Activated T-helper 1 cell treated with anti-CD3 and anti-CD28 coated beads, Interleukin-12 subunit alpha, Interleukin-12 subunit beta, Interleukin-2, Interleukin-4 antibody, amounts not matched to agents 30 ng/mL and 10 ng/mL and 1 ng/mL, durations not matched to agents 14 hours and 24 hours and 36 hours (primary cell): ENCODE measurements at regions of chr16 and their contacts with region 1.

Region 1: GRCh38 chr16:234468-235305 is at the start of gene FAM234A:
- DNase-seq: peak; percentile 92
- H3K4me3 Mint-ChIP-seq: peak within 1 kb of the TSS; percentile 96
- H3K27ac Mint-ChIP-seq: peak within 1 kb of the TSS; percentile 98
- H3K4me1 Mint-ChIP-seq: peaks cover 14% of the 10 kb centered on the region
- H3K27me3 Mint-ChIP-seq: peaks cover 6% of the 10 kb centered on the region
- total RNA-seq, gene FAM234A: 18.0 and 21.2 TPM in 2 replicates

Region 2: GRCh38 chr16:252366-253337 is 18.0 kb after region 1 on chr16:
- intact Hi-C with region 1: loop called (anchors 1 kb)
- DNase-seq: peak; percentile 16
- H3K4me3 Mint-ChIP-seq: peak overlapping the region; percentile 84
- H3K27ac Mint-ChIP-seq: peak overlapping the region; percentile 93
- H3K4me1 Mint-ChIP-seq: peaks cover 23% of the 10 kb centered on the region
- H3K27me3 Mint-ChIP-seq: peaks cover 7% of the 10 kb centered on the region

Region 3: GRCh38 chr16:278863-279366 is 44.2 kb after region 1 on chr16:
- intact Hi-C with region 1: loop called (anchors 2 kb)
- DNase-seq: peak; percentile 7
- H3K4me3 Mint-ChIP-seq: no peak overlapping the region
- H3K27ac Mint-ChIP-seq: no peak overlapping the region
- H3K4me1 Mint-ChIP-seq: no peaks in the 10 kb centered on the region
- H3K27me3 Mint-ChIP-seq: peaks cover 34% of the 10 kb centered on the region

Region 4: DNA sequence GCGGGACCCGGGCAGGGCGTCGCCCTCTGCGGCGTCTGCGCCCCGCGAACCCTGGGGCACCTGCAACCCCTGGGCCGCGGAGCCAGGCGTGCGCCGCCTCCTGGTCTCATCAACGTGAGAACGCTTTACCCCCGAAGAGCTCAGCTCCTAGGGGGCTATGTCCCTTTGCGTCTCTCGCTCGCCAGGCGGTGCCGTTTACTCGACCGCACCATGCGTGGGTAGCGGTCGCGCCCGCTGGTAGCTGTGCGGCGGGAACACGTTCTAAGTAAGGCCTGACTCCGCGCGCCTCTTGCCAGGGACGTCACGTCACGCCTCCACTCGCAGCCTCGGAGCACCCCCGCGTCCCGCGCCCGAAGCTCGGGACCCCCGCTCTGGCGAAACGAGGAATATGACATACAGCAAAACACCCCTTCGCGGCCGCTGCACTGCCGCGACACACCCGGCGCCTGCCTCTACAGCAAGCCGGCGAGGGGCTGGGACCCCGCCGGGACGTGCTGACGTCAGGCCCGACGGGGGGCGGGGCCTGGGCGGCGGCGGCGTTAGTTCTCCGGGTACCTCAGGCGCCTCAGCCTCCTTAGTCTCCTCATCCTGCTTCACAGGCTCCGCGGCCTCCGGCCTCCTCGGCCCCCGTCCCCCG is 190.5 kb after region 1 on chr16 and contains the start of gene RAB11FIP3:
- intact Hi-C with region 1: loop called (anchors 1 kb)
- DNase-seq: peak; percentile 83
- H3K4me3 Mint-ChIP-seq: peak within 1 kb of the TSS; percentile 84
- H3K27ac Mint-ChIP-seq: peak within 1 kb of the TSS; percentile 88
- H3K4me1 Mint-ChIP-seq: peaks cover 32% of the 10 kb centered on the region
- H3K27me3 Mint-ChIP-seq: peaks cover 16% of the 10 kb centered on the region
- total RNA-seq, gene RAB11FIP3: 41.4 and 47.5 TPM in 2 replicates

Region 5: GRCh38 chr16:861446-861845 is 626.8 kb after region 1 on chr16:
- intact Hi-C with region 1: no loop called
- DNase-seq: no peak
- H3K4me3 Mint-ChIP-seq: no peak overlapping the region
- H3K27ac Mint-ChIP-seq: no peak overlapping the region
- H3K4me1 Mint-ChIP-seq: no peaks in the 10 kb centered on the region
- H3K27me3 Mint-ChIP-seq: no peaks in the 10 kb centered on the region